B cell (primary cell): ENCODE measurements at regions of chr1 and their contacts with region 1.

Region 1: GRCh38 chr1:36385410-36386257 is at the start of gene STK40:
- DNase-seq: peak; percentile 98
- ATAC-seq: peak; percentile 84
- H3K4me3 ChIP-seq: peak within 1 kb of the TSS; percentile 74 to 97 (median 93)
- H3K4me3 Mint-ChIP-seq: peak within 1 kb of the TSS; percentile 97
- H3K27ac ChIP-seq: peak within 1 kb of the TSS; percentile 92 to 93
- H3K27ac Mint-ChIP-seq: peak within 1 kb of the TSS; percentile 100
- H3K4me1 ChIP-seq: peaks cover 64 to 80% of the 10 kb centered on the region in 2 donors
- H3K4me1 Mint-ChIP-seq: peaks cover 79% of the 10 kb centered on the region
- H3K27me3 ChIP-seq: no peaks in the 10 kb centered on the region
- H3K27me3 Mint-ChIP-seq: no peaks in the 10 kb centered on the region
- CTCF ChIP-seq: no peak
- total RNA-seq, gene STK40: 69.1 and 72.8 TPM in 2 replicates

Region 2: GRCh38 chr1:36088575-36089443 is 296.8 kb before region 1 on chr1 and contains the start of gene ADPRS:
- CTCF ChIA-PET with region 1: no interaction called
- POLR2A ChIA-PET with region 1: no interaction called
- intact Hi-C with region 1: loop called (anchors 2 kb)
- DNase-seq: peak; percentile 95
- ATAC-seq: peak; percentile 88
- H3K4me3 ChIP-seq: peak within 1 kb of the TSS; percentile 79 to 98 (median 84)
- H3K4me3 Mint-ChIP-seq: peak within 1 kb of the TSS; percentile 97
- H3K27ac ChIP-seq: peak within 1 kb of the TSS; percentile 78 to 92
- H3K27ac Mint-ChIP-seq: peak within 1 kb of the TSS; percentile 94
- H3K4me1 ChIP-seq: peaks cover 22 to 28% of the 10 kb centered on the region in 2 donors
- H3K4me1 Mint-ChIP-seq: peaks cover 22% of the 10 kb centered on the region
- H3K27me3 ChIP-seq: peaks cover 0 to 18% (median 9%) of the 10 kb centered on the region in 4 experiments
- H3K27me3 Mint-ChIP-seq: peaks cover 16% of the 10 kb centered on the region
- CTCF ChIP-seq: peak; percentile 97
- total RNA-seq, gene ADPRS: 20.9 and 24.0 TPM in 2 replicates

Region 3: DNA sequence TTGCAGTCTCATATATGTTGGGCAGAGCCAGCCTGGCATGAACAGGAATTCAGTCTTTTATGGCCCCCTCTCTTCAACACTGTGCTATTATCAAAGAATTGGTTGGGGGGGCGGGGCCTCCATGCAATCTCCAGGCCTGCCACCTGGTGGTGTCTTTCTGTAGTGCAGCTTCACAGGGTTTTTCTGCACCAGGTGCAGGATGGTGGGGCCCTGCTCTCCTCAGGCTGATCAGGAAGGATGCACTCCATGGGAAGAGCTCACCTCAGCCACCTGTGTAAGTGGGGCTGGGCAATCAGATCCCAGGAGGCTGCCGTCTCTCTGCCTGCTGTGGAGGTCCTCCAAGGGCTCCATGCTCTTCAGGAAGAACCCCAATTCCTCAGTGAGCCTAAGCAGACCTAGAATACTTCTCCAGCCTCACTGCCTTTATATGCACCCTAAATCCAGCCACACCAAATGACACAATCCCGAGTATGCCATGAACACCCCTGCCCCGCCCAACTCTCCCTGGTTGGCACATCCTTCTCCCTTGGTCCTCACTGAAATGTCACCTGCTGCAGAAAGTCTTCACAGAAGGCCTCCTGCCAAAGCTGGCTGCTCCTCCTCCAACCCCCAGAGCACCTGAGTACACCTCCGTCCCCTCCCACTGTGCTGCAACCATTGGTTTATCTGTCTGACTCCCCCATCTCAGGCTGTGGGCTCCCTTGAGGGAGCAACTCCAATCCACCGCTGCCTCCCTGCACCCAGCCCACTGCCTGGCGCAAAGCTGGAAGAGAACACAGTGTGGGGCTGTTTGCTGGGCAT is 16.4 kb before region 1 on chr1:
- CTCF ChIA-PET with region 1: interaction called, 30 read pairs
- POLR2A ChIA-PET with region 1: interaction called, 4 read pairs
- intact Hi-C with region 1: no loop called
- DNase-seq: peak; percentile 89
- ATAC-seq: peak; percentile 63
- H3K4me3 ChIP-seq: no peak overlapping the region
- H3K4me3 Mint-ChIP-seq: peak overlapping the region; percentile 16
- H3K27ac ChIP-seq: no peak overlapping the region
- H3K27ac Mint-ChIP-seq: peak overlapping the region; percentile 83
- H3K4me1 ChIP-seq: peaks cover 66 to 84% of the 10 kb centered on the region in 2 donors
- H3K4me1 Mint-ChIP-seq: peaks cover 76% of the 10 kb centered on the region
- H3K27me3 ChIP-seq: no peaks in the 10 kb centered on the region
- H3K27me3 Mint-ChIP-seq: no peaks in the 10 kb centered on the region
- CTCF ChIP-seq: peak; percentile 88

Region 4: DNA sequence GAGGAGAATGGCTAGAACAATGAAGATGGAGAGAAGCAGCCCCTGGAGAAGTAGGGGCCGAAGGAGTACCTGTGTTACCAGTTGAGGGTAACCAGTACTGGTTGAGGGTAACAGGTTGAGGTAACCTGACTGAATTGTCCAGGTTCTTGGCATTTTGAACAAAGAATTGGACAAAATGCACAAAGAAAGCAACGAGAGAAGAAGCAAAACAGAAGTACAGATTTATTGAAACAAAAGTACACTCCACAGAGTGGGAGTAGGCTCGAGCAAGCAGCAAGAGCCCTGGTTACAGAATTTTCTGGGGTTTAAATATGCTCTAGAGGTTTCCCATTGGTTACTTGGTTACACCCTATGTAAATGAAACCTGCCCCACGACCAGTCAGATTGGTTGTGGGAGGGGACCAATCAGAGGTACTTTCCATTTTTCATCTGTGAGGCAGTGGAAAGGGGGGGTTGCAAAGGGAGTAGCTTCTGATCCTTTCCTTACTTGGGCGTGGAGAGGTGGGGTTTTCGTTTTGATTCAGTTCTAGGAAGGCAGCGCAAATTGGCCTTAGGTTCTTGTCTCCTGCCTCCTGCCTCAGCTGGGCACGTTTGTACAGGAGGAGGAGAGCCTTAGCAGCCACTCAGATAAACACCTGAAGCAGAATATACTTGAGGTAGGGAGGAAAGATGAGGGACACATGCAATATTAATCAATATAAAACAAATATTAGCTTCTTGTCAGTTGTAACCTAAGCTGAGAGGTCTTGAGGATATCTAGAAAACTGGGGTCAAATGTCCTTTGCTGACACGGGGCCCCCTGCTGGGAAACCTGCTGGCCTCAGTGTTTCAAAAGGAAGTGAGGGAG is 26.3 kb after region 1 on chr1:
- CTCF ChIA-PET with region 1: interaction called, 10 read pairs
- POLR2A ChIA-PET with region 1: no interaction called
- intact Hi-C with region 1: no loop called
- DNase-seq: peak; percentile 32
- ATAC-seq: peak; percentile 57
- H3K4me3 ChIP-seq: no peak overlapping the region
- H3K4me3 Mint-ChIP-seq: peak overlapping the region; percentile 3
- H3K27ac ChIP-seq: peak overlapping the region; percentile 8 to 41
- H3K27ac Mint-ChIP-seq: peak overlapping the region; percentile 56
- H3K4me1 ChIP-seq: peaks cover 12 to 14% of the 10 kb centered on the region in 2 donors
- H3K4me1 Mint-ChIP-seq: peaks cover 21% of the 10 kb centered on the region
- H3K27me3 ChIP-seq: no peaks in the 10 kb centered on the region
- H3K27me3 Mint-ChIP-seq: no peaks in the 10 kb centered on the region
- CTCF ChIP-seq: no peak

Region 5: GRCh38 chr1:36450270-36450918 is 64.8 kb after region 1 on chr1 and contains the start of gene OSCP1:
- CTCF ChIA-PET with region 1: no interaction called
- POLR2A ChIA-PET with region 1: interaction called, 3 read pairs
- intact Hi-C with region 1: loop called (anchors 1 kb)
- DNase-seq: peak; percentile 96
- ATAC-seq: peak; percentile 98
- H3K4me3 ChIP-seq: peak within 1 kb of the TSS; percentile 67 to 86 (median 76)
- H3K4me3 Mint-ChIP-seq: peak within 1 kb of the TSS; percentile 97
- H3K27ac ChIP-seq: peak within 1 kb of the TSS; percentile 92 to 96
- H3K27ac Mint-ChIP-seq: peak within 1 kb of the TSS; percentile 96
- H3K4me1 ChIP-seq: peaks cover 3 to 15% of the 10 kb centered on the region in 2 donors
- H3K4me1 Mint-ChIP-seq: peaks cover 18% of the 10 kb centered on the region
- H3K27me3 ChIP-seq: no peaks in the 10 kb centered on the region
- H3K27me3 Mint-ChIP-seq: no peaks in the 10 kb centered on the region
- CTCF ChIP-seq: no peak
- total RNA-seq, gene OSCP1: 0.56 and 0.94 TPM in 2 replicates